ENCODE measurements at regions of chr1 and their contacts with region 1.

Region 1: DNA sequence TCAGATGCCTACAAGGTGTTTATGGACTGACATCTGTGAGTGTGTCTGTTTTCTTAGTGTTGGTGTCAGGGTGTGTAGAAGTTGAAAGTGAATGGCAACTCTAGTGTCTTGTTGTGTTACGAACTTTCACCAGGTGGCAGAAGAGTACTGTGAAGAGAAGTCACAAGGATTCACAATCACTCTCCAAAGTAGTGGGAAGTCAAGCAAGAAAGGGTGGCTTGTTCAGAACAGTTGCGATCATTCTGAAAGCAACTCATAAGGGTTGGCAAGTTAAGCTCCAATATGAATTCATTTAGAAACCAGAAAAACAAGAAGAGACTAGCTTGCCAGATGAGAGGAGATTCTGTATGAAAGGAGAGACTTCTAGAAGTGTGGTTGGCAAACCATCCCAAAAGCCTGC is 86.1 kb downstream of the FASLG start:
- DNase-seq: no peak
- H3K4me3 Mint-ChIP-seq: no peak overlapping the region
- H3K27ac Mint-ChIP-seq: peak overlapping the region; percentile 18
- H3K4me1 Mint-ChIP-seq: peaks cover 26% of the 10 kb centered on the region
- H3K27me3 Mint-ChIP-seq: peaks cover 49% of the 10 kb centered on the region

Region 2: GRCh38 chr1:172761581-172762025 is 16.6 kb after region 1 on chr1:
- intact Hi-C with region 1: loop called (anchors 2 kb)
- DNase-seq: no peak
- H3K4me3 Mint-ChIP-seq: no peak overlapping the region
- H3K27ac Mint-ChIP-seq: no peak overlapping the region
- H3K4me1 Mint-ChIP-seq: peaks cover 37% of the 10 kb centered on the region
- H3K27me3 Mint-ChIP-seq: peaks cover 42% of the 10 kb centered on the region

Region 3: GRCh38 chr1:172837816-172838680 is 93.0 kb after region 1 on chr1:
- intact Hi-C with region 1: loop called (anchors 1 kb)
- DNase-seq: no peak
- H3K4me3 Mint-ChIP-seq: no peak overlapping the region
- H3K27ac Mint-ChIP-seq: no peak overlapping the region
- H3K4me1 Mint-ChIP-seq: peaks cover 29% of the 10 kb centered on the region
- H3K27me3 Mint-ChIP-seq: peaks cover 53% of the 10 kb centered on the region

Region 4: DNA sequence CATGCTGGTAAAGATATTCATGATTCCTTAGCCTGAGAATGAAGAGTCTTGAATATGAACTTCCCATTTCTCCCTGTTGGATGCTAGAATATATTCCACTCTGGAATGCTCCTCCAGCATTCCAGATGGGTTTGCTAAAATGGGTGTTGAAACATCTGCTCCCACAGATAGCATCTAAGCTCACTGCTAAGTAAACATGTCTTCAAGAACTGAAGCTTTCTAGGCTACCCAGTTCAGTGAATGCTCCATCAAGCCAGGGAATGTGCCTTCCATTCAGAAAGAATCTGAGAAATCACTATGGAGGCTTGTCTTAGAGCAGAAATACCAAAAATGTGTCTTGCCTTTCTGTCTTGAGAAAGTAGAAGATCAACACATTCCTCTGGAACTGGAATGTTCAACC is 224.6 kb after region 1 on chr1:
- intact Hi-C with region 1: loop called (anchors 5 kb)
- DNase-seq: no peak
- H3K4me3 Mint-ChIP-seq: no peak overlapping the region
- H3K27ac Mint-ChIP-seq: no peak overlapping the region
- H3K4me1 Mint-ChIP-seq: peaks cover 14% of the 10 kb centered on the region
- H3K27me3 Mint-ChIP-seq: peaks cover 31% of the 10 kb centered on the region

Region 5: DNA sequence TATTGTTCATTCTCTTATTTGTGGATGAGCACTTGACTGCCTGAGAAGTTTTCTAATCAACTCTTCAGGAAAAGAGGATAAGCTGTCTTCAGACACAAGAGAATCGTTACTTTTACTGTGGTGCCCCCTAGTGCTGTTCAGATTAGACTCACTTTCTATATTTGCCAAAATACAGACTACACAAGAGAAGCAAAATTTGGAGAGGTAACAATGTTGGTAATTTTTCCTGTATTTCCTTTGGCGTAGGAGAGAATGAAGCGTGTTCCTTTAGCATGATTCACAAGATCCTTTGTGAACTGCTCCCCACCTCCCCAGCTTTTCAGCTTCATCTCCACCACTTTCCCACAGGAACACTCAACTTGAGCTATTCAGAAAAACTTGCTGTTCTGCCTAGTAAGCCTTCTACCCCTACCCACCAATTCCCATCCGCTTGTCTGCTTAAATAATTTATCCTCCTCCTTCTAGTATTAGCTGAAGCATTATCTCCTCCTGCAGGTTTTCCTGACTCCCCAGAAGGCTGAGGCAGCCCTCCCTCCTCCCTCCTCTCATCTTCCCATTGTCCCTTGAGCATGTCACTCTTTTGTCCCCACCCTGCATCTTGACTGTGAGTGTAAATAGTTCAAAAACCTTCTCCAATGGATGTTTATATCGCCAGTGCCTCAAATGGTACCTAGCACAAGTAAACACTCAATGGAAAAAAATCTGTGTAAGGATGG is 457.6 kb after region 1 on chr1:
- intact Hi-C with region 1: loop called (anchors 1 kb)
- DNase-seq: no peak
- H3K4me3 Mint-ChIP-seq: no peak overlapping the region
- H3K27ac Mint-ChIP-seq: no peak overlapping the region
- H3K4me1 Mint-ChIP-seq: peaks cover 31% of the 10 kb centered on the region
- H3K27me3 Mint-ChIP-seq: peaks cover 49% of the 10 kb centered on the region

Region 6: DNA sequence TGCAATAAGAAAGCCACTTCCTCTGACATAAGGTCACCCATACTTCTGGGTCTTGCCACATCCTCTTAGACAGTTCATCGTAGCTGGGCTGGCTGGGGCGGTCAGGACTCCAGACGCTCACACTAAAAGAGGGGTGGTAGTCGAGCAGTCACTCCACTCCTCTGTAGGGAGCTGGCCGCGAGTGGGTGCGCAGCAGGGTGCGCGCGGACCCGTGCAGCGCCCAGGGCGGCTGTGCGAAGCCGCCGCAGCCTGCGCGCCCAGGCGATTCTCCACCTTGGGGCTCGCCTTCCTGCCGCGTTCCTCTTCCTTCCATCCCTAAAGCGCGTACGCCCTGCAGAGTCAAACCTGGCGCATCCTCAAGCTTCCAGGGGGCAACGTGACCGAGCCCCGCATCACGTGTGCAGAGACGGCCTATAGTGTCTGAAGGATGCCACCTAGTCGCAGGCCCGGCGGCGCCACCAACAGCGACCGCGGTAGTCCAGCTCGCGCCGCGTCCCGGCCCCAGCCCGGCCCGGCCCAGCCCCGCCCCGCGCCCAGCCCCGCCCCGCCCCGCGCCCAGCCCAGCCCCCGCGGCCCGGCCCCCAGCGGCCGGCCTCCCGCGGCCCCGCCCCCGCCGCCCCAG is 731.8 kb after region 1 on chr1:
- intact Hi-C with region 1: loop called (anchors 5 kb)
- DNase-seq: peak; percentile 74
- H3K4me3 Mint-ChIP-seq: peak overlapping the region; percentile 92
- H3K27ac Mint-ChIP-seq: peak overlapping the region; percentile 94
- H3K4me1 Mint-ChIP-seq: peaks cover 53% of the 10 kb centered on the region
- H3K27me3 Mint-ChIP-seq: no peaks in the 10 kb centered on the region

Measured in activated T-helper 2 cell treated with anti-CD3 and anti-CD28 coated beads, Interferon-gamma antibody, Interleukin-2, Interleukin-4, amounts not matched to agents 10 μg/mL and 5 μg/mL and 100 μg/mL, durations not matched to agents 14 hours and 24 hours and 36 hours (primary cell).